Dorsolateral prefrontal cortex (tissue), 120 donors: ENCODE measurements at regions of chr6 and their contacts with region 1.

Region 1: GRCh38 chr6:108689247-108690161 is 128.8 kb downstream of the FOXO3 start:
- DNase-seq: peak in 3 of 10 donors; percentile 17 to 44 (median 34)
- H3K4me3 ChIP-seq: no peak overlapping the region
- H3K27ac ChIP-seq: peak overlapping the region in 2 of 59 donors; percentile 11 to 19
- H3K27me3 ChIP-seq: no peaks in the 10 kb centered on the region
- CTCF ChIP-seq: no peak

Region 2: GRCh38 chr6:108565893-108566292 is 123.6 kb before region 1 on chr6:
- intact Hi-C with region 1: loop called in 1 of 2 experiments (anchors 5 kb)
- DNase-seq: no peak
- H3K4me3 ChIP-seq: peak overlapping the region in 34 of 59 donors; percentile 5 to 99 (median 32)
- H3K27ac ChIP-seq: peak overlapping the region in 54 of 59 donors; percentile 18 to 100 (median 63)
- H3K27me3 ChIP-seq: no peaks in the 10 kb centered on the region
- CTCF ChIP-seq: peak in 21 of 56 donors; percentile 9 to 34 (median 22)